CD8-positive, alpha-beta memory T cell (primary cell): ENCODE measurements at regions of chr2 and their contacts with region 1.

Region 1: DNA sequence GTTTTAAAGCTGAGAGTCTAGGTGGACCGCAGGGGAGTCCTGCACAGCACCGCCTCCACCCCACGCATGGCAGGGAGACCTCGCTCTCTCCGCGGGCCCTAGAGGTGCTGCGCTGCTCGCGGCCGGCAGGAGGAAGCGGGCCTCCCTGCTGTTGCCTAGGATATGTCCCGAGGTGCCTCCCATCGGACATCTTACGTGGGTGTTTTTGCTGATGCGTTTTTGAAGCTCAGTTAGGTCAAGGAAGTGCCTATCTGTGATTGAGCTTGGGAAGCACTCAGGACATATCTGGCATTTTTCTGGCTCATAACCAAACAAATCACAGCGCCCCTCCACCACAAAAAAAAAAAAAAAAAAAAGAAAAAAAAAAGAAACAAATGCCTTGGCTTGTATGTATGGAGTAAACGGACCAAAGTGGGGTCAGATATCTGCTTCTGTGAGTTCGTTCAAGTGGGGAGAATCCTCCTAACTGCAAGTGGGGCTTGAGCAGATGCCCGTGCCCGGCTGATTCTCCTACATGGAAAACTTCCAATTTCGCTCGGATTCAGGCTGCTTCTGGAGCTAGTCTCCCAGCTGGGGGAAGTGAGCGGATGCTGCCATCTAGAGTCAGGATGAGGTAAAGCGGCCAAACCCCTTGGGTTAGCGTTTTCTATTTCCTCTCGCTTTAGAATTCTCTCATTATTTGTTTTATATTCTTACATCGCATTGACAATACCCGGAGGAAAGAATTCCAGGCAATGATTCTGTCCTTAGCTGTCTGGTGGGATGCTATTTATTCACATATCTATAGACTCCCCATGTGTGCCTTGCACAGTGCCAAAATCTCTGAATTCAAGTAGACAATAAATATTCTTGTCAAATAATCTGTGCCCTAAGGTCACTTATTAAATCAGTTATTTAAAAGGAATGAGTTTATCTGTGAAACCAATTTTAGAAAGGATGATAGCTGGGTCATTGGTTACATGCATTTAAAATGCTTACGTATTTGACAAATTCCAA is 95.3 kb downstream of the CD8B2 start:
- DNase-seq: peak; percentile 29 to 65 (median 37)
- H3K4me3 ChIP-seq: peak overlapping the region; percentile 67
- H3K4me3 Mint-ChIP-seq: peak overlapping the region; percentile 79 to 95 (median 92)
- H3K27ac ChIP-seq: no peak overlapping the region
- H3K27ac Mint-ChIP-seq: peak overlapping the region in 5 of 8 donors; percentile 2 to 84 (median 65)
- H3K4me1 ChIP-seq: no peaks in the 10 kb centered on the region
- H3K4me1 Mint-ChIP-seq: peaks cover 13 to 21% (median 18%) of the 10 kb centered on the region in 3 donors
- H3K27me3 ChIP-seq: peaks cover 5% of the 10 kb centered on the region
- H3K27me3 Mint-ChIP-seq: peaks cover 23 to 56% of the 10 kb centered on the region in 2 donors

Region 2: GRCh38 chr2:106596844-106597243 is 14.4 kb after region 1 on chr2:
- CTCF ChIA-PET with region 1: interaction called, 12 read pairs
- POLR2A ChIA-PET with region 1: no interaction called
- DNase-seq: no peak
- H3K4me3 ChIP-seq: no peak overlapping the region
- H3K4me3 Mint-ChIP-seq: no peak overlapping the region
- H3K27ac ChIP-seq: no peak overlapping the region
- H3K27ac Mint-ChIP-seq: no peak overlapping the region
- H3K4me1 ChIP-seq: no peaks in the 10 kb centered on the region
- H3K4me1 Mint-ChIP-seq: no peaks in the 10 kb centered on the region
- H3K27me3 ChIP-seq: no peaks in the 10 kb centered on the region
- H3K27me3 Mint-ChIP-seq: peaks cover 7 to 41% of the 10 kb centered on the region in 2 donors

Region 3: DNA sequence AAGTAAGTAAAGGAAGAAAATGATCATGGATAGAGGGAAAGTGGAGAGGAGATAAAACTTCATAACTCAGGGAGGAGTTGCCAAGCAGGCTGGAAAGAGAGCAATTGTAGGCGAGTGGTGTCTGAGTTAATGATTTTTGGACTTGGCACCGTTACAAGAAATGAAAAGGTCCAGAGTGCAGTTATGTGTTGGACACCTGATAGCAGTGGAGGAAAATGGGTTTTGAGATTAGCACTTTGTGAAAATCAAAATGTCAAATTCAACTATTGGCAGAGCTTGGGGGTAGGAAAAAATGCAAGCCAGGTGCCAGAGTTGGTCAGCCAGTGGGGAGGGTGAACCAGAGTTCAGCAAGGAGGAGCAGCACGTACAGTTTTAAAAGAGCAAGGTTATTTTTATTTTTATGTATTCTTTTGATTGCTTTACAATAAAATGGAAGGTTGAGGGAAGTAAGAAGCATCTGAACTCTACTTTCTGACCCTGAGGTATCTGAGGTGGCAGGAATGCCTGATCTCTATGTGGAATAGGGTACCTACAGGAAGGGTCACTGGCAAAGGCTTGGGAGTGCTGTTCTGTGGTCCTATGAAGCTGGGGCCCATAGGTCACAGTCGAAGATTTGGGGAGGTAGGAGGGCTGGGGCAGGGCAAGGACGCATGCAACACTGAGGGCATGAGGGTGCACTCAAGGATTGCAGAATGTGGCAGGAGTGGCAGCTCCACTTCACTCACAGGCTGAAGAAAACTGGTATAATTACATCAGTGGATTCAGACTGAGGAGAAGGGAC is 32.3 kb after region 1 on chr2:
- CTCF ChIA-PET with region 1: no interaction called
- POLR2A ChIA-PET with region 1: no interaction called
- DNase-seq: no peak
- H3K4me3 ChIP-seq: no peak overlapping the region
- H3K4me3 Mint-ChIP-seq: no peak overlapping the region
- H3K27ac ChIP-seq: no peak overlapping the region
- H3K27ac Mint-ChIP-seq: no peak overlapping the region
- H3K4me1 ChIP-seq: no peaks in the 10 kb centered on the region
- H3K4me1 Mint-ChIP-seq: no peaks in the 10 kb centered on the region
- H3K27me3 ChIP-seq: no peaks in the 10 kb centered on the region
- H3K27me3 Mint-ChIP-seq: peaks cover 9 to 21% of the 10 kb centered on the region in 2 donors

Region 4: DNA sequence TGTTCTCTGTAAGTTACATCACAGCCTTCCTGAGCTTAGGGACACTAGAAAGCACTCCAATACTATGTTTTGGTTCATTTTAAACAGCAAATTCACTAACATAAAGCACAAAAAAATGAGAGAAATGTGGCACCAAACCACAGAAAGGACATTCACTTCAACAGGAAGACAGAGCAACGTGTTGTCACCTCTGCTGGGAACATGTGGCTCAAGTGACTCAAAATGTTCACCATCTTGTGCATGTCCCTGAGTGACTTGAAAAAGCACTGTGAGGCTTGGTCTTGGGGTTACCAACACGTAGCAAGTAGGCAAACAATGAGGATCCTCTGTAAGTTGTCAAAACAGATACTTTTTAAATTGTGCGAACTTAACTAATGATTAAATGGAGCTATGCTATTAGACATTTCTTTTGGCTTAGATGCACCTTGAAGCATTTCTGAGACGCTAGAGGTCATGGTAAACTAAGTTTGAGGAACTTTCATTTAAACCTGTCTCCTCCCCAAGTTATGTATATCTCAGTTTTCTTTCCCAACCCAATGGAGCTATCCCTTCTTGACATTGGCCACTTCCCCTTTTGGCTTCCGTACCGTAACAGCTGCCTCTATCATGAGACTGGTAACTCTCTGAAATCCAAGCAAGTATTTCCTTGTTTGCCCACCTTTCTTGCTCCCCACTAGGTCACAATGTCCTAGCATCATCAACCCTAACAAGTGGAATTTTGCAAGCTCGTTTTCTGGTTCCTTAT is 317.5 kb after region 1 on chr2:
- CTCF ChIA-PET with region 1: no interaction called
- POLR2A ChIA-PET with region 1: no interaction called
- DNase-seq: no peak
- H3K4me3 ChIP-seq: no peak overlapping the region
- H3K4me3 Mint-ChIP-seq: no peak overlapping the region
- H3K27ac ChIP-seq: no peak overlapping the region
- H3K27ac Mint-ChIP-seq: no peak overlapping the region
- H3K4me1 ChIP-seq: no peaks in the 10 kb centered on the region
- H3K4me1 Mint-ChIP-seq: no peaks in the 10 kb centered on the region
- H3K27me3 ChIP-seq: no peaks in the 10 kb centered on the region
- H3K27me3 Mint-ChIP-seq: peaks cover 0 to 2% of the 10 kb centered on the region in 2 donors